Activated CD8-positive, alpha-beta T cell treated with anti-CD3 and anti-CD28 coated beads for 36 hours (primary cell): ENCODE measurements at regions of chr6 and their contacts with region 1.

Region 1: GRCh38 chr6:85482905-85483700 is 33.2 kb downstream of the NT5E start:
- DNase-seq: peak; percentile 91
- ATAC-seq: peak; percentile 96
- H3K4me3 Mint-ChIP-seq: no peak overlapping the region
- H3K27ac Mint-ChIP-seq: peak overlapping the region; percentile 36
- H3K4me1 Mint-ChIP-seq: peaks cover 17% of the 10 kb centered on the region
- H3K27me3 Mint-ChIP-seq: no peaks in the 10 kb centered on the region
- CTCF ChIP-seq: peak; percentile 99

Region 2: GRCh38 chr6:85360794-85361642 is 122.1 kb before region 1 on chr6:
- CTCF ChIA-PET with region 1: interaction called, 180 read pairs
- POLR2A ChIA-PET with region 1: interaction called, 9 read pairs
- intact Hi-C with region 1: no loop called
- DNase-seq: peak; percentile 8
- ATAC-seq: peak; percentile 63
- H3K4me3 Mint-ChIP-seq: no peak overlapping the region
- H3K27ac Mint-ChIP-seq: no peak overlapping the region
- H3K4me1 Mint-ChIP-seq: peaks cover 14% of the 10 kb centered on the region
- H3K27me3 Mint-ChIP-seq: no peaks in the 10 kb centered on the region
- CTCF ChIP-seq: no peak

Region 3: GRCh38 chr6:85404502-85405174 is 78.5 kb before region 1 on chr6:
- CTCF ChIA-PET with region 1: interaction called, 31 read pairs
- POLR2A ChIA-PET with region 1: no interaction called
- intact Hi-C with region 1: no loop called
- DNase-seq: no peak
- ATAC-seq: no peak
- H3K4me3 Mint-ChIP-seq: no peak overlapping the region
- H3K27ac Mint-ChIP-seq: peak overlapping the region; percentile 4
- H3K4me1 Mint-ChIP-seq: peaks cover 60% of the 10 kb centered on the region
- H3K27me3 Mint-ChIP-seq: no peaks in the 10 kb centered on the region
- CTCF ChIP-seq: no peak

Region 4: DNA sequence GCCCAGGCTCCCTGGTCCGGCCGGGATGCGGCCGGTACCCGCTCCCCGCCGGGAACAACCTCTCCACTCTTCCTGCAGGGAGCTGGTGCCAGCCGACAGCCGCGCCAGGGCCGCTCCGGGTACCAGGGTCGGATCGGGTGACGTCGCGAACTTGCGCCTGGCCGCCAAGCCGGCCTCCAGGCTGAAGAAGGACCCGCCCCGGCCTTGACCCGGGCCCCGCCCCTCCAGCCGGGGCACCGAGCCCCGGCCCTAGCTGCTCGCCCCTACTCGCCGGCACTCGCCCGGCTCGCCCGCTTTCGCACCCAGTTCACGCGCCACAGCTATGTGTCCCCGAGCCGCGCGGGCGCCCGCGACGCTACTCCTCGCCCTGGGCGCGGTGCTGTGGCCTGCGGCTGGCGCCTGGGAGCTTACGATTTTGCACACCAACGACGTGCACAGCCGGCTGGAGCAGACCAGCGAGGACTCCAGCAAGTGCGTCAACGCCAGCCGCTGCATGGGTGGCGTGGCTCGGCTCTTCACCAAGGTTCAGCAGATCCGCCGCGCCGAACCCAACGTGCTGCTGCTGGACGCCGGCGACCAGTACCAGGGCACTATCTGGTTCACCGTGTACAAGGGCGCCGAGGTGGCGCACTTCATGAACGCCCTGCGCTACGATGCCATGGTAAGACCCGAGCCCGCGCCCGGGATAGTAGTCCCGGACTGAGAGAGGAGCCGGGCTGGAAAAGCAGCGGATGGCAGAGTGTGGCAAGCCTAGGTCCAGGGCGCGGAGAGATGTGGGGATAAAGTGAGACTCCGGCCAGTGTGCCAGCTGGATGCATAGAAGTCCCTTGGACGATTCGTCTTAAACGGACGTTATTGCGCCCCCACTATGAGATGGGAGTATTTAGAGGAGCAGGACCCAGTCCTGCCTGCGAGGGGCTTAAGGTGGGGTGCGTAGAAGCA is 33.0 kb before region 1 on chr6 and contains the start of gene NT5E:
- CTCF ChIA-PET with region 1: interaction called, 364 read pairs
- POLR2A ChIA-PET with region 1: interaction called, 7 read pairs
- intact Hi-C with region 1: no loop called
- DNase-seq: peak; percentile 78
- ATAC-seq: peak; percentile 59
- H3K4me3 Mint-ChIP-seq: peak within 1 kb of the TSS; percentile 91
- H3K27ac Mint-ChIP-seq: peak within 1 kb of the TSS; percentile 96
- H3K4me1 Mint-ChIP-seq: peaks cover 54% of the 10 kb centered on the region
- H3K27me3 Mint-ChIP-seq: no peaks in the 10 kb centered on the region
- CTCF ChIP-seq: no peak
- total RNA-seq, gene NT5E: 5.2 to 6.7 TPM

Region 5: GRCh38 chr6:85537055-85537494 is 54.0 kb after region 1 on chr6:
- CTCF ChIA-PET with region 1: interaction called, 43 read pairs
- POLR2A ChIA-PET with region 1: interaction called, 3 read pairs
- intact Hi-C with region 1: no loop called
- DNase-seq: no peak
- ATAC-seq: no peak
- H3K4me3 Mint-ChIP-seq: no peak overlapping the region
- H3K27ac Mint-ChIP-seq: no peak overlapping the region
- H3K4me1 Mint-ChIP-seq: no peaks in the 10 kb centered on the region
- H3K27me3 Mint-ChIP-seq: no peaks in the 10 kb centered on the region
- CTCF ChIP-seq: peak; percentile 76